Testis (tissue), 5 donors: ENCODE measurements at regions of chr20 and their contacts with region 1.

Region 1: GRCh38 chr20:32652739-32653526 is 20.8 kb downstream of the C20orf203 start:
- DNase-seq: peak; percentile 94
- H3K4me3 ChIP-seq: no peak overlapping the region
- H3K27ac ChIP-seq: no peak overlapping the region
- H3K4me1 ChIP-seq: peaks cover 6% of the 10 kb centered on the region
- H3K27me3 ChIP-seq: no peaks in the 10 kb centered on the region
- CTCF ChIP-seq: peak; percentile 91 to 97 (median 96)
- POLR2A ChIP-seq: no peak

Region 2: DNA sequence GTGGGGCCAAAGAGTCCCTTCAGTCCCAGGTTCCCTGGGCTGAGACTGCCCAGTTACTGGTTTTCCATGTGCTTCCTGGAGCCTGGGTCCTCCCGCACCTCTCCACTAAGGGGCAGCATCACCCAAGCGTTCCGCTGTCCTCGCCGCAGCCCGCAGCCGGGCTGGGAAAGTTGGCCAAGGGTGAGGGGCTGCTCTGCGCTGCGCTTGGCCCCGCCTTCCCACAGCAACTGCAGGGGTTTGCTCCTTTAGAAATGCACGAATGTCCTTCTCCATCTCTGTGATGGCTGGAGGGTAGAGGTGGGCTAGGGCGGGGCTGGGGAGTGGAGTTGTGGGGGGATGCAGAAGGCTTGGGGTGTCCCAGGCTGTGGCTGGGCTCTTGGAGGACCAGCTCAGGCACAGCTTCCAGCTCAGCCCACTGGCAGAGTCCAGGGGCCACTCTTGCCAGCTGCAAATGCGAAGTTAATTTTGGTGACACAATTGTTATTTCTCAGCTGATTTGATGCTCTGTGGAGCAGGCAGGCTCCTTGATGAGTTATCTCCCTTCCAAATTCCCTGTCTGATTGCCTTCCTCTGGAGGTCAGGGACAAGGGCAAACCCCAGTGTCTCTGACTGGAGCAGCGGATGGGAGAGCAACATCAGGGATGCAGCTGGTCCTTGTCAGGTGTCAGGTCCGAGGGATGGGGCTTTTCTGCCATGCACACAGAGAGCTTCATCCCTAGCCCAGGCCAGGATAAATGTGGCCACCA is 131.0 kb before region 1 on chr20:
- intact Hi-C with region 1: loop called (anchors 5 kb)
- DNase-seq: peak; percentile 71
- H3K4me3 ChIP-seq: no peak overlapping the region
- H3K27ac ChIP-seq: no peak overlapping the region
- H3K4me1 ChIP-seq: peaks cover 49% of the 10 kb centered on the region
- H3K27me3 ChIP-seq: no peaks in the 10 kb centered on the region
- CTCF ChIP-seq: peak; percentile 73 to 79 (median 78)
- POLR2A ChIP-seq: no peak